Right ventricle myocardium superior (tissue), 1 donor: ENCODE measurements at regions of chr5 and their contacts with region 1.

Region 1: DNA sequence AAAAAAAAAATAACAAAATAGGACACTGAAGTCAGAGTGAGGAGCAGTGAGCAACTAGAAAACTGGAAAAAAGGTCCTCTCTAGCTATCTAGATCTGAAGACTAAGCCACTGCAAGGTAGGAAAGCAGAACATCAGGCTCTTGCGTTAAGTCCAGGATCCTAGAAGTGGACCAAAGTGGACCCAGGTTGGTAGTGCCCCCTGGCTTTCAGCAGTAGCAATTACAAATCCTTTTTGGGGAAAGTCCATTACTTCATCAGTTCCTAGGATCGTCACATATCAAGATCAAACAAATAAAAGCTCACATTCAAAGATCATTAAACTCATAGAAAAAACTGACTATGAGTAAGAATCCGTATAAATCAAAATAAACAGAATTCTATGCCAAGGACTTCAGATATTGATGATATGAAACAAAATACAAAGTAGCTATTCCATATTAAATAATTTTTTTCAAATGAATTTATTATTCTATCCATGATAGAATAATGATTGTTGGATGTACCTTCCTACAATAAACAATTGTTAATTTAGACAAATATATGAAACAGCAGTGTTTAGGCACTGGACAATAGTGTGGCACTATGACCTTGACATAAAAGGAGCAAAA is 6.5 kb upstream of the RICTOR start:
- DNase-seq: no peak
- ATAC-seq: peak; percentile 87

Region 2: GRCh38 chr5:38997591-38997990 is 83.1 kb before region 1 on chr5:
- intact Hi-C with region 1: loop called (anchors 5 kb)
- DNase-seq: no peak
- ATAC-seq: peak; percentile 54

Region 3: GRCh38 chr5:39005566-39006232 is 75.0 kb before region 1 on chr5:
- intact Hi-C with region 1: loop called (anchors 2 kb)
- DNase-seq: no peak
- ATAC-seq: peak; percentile 88

Region 4: DNA sequence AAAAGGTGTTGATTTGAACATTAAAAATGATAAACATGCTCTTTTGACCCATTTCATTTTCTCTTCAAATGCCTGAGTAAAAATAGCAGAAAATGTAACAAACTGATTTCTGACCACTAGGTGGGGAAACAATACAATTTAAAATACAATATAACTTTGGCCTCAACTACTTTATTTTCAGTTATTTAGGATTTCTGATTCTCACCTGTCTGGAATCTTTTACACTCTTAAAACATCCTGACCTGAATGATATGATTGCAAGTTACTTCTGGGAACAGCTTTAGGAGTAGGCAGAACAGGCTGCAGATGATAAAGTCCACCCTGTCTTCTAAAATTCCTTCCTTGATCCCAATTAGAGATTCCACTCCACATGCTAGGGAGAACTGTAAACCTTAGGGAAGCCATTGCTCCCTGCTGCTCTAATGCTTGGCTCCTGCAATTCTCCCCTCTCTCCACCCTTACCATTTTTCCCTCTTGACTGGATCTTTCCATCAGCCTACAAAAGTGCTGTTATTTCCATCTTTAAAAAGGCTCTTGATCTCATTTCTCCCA is 68.4 kb after region 1 on chr5:
- intact Hi-C with region 1: no loop called
- DNase-seq: no peak
- ATAC-seq: no peak

Region 5: DNA sequence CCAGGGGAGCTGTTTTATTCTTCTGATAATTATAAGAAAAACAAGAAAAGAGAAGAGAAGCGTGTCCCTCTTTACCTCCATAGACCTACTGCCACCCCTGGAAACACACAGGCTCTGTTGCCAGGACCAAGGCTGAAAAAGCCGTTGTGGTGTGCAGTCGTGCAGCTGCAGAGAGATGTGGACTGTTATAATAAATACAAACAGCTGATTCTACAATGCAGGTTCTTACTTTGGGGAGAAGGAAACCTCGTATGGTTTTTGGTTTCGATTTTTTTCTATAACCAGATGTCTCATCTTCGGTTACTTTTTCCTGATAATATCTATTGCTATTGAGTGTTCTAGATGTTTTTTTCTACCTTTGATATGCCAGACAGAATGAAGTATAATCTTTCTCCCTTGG is 110.5 kb after region 1 on chr5:
- intact Hi-C with region 1: no loop called
- DNase-seq: no peak
- ATAC-seq: no peak

Region 6: DNA sequence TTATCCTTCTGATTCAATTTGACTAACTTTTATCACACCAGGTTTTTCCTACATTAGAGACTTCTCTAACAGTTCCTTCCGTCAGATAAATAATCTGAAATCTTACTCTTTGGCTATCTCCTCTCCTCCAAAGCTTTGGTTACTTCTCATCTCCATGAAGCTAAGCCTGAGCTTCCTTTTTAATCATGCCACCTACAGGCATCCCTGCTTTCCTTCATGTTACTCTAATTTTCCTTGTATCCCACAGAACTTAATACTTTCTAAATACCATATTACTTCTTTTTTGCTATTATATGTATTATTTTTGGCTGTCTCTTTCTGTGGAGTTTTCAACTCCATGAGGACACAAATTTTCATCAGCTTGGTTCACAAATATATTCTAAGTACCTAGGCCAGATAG is 233.9 kb after region 1 on chr5:
- intact Hi-C with region 1: no loop called
- DNase-seq: no peak
- ATAC-seq: no peak